ENCODE measurements at regions of chr11 and their contacts with region 1.

Region 1: DNA sequence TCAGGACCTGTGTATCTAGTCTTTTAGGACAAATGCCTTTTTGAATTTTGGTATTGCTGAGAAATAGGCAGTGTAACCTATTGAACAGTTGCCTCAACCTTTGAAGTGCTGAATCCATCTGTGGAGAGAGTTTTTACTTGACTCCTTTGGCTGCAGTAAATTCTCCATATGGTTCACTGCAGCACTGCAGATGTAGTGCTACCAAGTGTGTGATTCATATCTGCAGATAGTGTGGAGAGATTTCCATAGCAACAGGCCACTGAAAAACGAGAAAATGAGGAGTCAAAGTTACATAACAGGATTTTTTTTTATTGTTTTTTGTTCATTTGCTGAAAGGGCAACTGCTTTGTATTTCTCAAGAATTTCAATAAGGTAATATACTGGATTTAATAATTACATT is 356.1 kb downstream of the RAB38 start:
- DNase-seq: no peak
- H3K4me3 Mint-ChIP-seq: no peak overlapping the region
- H3K27ac Mint-ChIP-seq: no peak overlapping the region
- H3K4me1 Mint-ChIP-seq: no peaks in the 10 kb centered on the region
- H3K27me3 Mint-ChIP-seq: no peaks in the 10 kb centered on the region
- CTCF ChIP-seq: no peak

Region 2: DNA sequence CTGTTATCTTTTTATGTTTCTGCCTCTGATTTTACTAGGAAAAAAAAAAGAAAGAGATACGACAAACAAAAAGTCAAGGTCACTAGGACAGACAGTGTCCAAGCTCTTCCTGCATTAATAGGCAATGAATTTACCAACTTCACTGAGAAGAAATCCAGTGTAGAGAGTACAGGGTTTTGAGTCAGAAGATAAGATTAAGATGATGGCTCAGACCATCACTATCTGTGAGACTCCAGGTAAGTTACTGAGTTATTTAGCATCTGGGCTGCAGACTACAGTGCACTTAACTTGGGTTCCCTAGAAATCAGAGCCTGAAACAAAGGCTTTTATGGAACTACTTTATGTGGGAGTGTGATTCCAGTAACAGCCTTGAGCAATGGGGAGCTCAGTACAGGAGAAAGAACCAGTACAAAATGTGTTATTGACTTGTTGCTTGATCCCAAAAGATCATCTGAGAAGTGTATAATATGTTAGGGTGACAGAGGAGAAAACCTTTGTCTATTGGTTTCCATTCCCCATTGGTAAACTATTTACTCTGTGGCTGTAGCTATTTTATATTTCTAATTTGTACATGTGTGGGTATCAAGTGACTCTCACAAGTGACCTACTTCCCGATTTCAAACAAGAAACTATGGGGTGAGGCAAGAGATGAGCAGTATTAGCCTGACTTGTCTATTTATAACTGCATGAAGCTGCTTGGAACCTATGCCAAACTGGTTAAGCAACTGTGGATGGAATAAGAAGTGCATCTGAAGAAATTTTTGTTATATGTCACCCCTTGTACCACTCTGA is 39.7 kb before region 1 on chr11:
- CTCF ChIA-PET with region 1: no interaction called
- intact Hi-C with region 1: loop called (anchors 2 kb)
- DNase-seq: no peak
- H3K4me3 Mint-ChIP-seq: no peak overlapping the region
- H3K27ac Mint-ChIP-seq: no peak overlapping the region
- H3K4me1 Mint-ChIP-seq: no peaks in the 10 kb centered on the region
- H3K27me3 Mint-ChIP-seq: no peaks in the 10 kb centered on the region
- CTCF ChIP-seq: no peak